Left cardiac atrium (tissue), 4 donors: ENCODE measurements at regions of chr14 and their contacts with region 1.

Region 1: DNA sequence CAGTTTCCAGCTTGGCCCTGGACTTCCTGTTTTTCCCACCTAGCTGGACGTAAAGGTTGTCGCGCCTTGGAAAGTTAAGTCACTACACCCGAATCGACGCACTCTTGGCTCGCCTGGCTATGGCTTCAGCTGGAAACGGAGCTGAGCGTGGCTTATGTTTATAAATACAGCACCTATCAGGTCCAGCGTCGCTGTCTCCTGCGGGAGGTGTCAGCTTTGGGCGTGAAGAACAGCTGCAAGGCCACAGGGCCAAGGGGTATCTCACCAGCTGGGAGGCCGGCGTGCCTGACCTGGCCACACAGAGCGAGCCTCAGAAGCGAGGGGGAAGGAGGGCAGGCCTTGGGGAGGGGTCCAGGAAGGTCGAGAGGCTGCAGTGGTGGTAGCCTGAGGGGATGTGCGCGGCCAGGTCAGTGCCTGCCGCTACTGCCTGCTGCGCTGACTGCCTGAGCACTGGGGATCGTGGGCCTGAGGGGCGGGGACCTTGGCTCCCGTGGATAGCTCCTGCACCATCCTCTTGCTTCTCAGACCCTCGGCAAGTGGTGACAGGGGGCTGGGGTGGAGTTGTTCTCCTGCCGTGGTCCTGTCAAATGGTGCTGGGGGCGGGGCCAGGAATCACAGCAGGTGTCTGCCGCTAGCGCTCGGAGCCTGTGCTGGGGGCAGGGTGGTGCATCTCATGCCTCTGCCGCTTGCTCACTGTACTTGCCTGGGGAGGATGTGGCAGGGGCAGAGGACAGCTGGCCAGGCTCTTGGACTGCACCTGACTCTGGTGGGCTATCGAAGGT is 12.6 kb downstream of the PACS2 start:
- DNase-seq: peak; percentile 50
- ATAC-seq: peak; percentile 37 to 50

Region 2: GRCh38 chr14:105020815-105021655 is 306.1 kb before region 1 on chr14 and contains the start of gene CDCA4:
- intact Hi-C with region 1: no loop called
- DNase-seq: peak; percentile 98
- ATAC-seq: peak; percentile 96 to 97
- total RNA-seq, gene CDCA4: 3.2 to 3.3 TPM

Region 3: DNA sequence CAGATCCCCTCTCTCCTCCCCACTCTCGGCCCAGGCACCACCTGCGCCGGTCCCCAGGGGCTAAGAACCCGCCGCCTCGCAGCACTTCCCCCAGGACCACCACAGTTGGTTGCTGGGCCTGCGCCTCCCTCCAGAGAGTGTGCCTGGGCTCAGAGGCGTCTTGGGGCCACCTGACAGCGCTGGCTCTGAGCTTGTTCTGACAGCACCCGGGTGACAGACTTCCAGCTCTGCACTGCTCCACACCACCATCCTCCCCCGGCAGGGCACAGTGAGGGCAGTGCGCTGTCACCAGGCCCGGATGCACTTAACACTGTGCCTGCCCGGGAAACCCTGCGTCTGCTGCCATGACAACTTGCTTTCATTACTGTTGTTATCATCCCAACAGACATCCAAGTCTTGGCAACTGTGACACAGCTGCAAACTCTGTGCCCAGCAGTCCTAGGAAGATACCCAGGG is 32.9 kb before region 1 on chr14:
- intact Hi-C with region 1: loop called in 1 of 2 experiments (anchors 2 kb)
- DNase-seq: peak; percentile 78
- ATAC-seq: peak; percentile 96

Region 4: DNA sequence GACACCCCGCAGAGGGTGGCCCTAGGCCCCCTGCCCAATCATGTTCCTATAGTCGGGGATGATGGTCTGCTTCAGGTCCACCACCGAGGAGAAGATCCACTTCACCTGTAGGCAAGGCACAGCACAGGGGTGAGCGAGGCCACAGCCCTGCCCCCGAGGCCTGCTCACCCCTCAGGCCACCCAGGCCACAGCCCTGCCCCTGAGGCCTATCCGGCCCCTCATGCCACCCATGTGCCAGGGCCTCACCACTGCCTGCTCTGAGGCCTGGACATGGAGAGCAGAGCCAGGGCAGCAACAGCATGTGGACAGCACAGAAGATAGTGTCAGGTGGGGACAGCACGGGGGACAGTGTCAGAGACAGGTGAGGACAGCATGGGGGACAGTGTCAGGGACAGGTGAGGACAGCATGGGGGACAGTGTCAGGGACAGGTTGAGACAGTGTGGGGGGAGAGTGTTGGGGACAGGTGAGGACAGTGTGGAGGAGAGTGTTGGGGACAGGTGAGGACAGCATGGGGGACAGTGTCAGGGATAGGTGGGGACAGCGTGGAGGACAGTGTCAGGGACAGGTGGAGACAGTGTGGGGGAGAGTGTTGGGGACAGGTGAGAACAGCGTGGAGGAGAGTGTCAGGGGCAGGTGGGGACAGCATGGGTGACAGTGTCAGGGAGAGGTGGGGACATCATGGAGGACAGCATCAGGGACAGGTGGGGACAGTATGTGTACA is 438.9 kb after region 1 on chr14:
- intact Hi-C with region 1: no loop called
- DNase-seq: no peak
- ATAC-seq: no peak